ENCODE measurements at regions of chr20 and their contacts with region 1.

Region 1: GRCh38 chr20:13625304-13625979 is 13.3 kb downstream of the TASP1 start:
- DNase-seq: no peak
- H3K4me3 Mint-ChIP-seq: no peak overlapping the region
- H3K27ac Mint-ChIP-seq: no peak overlapping the region
- H3K4me1 Mint-ChIP-seq: peaks cover 7% of the 10 kb centered on the region
- H3K27me3 Mint-ChIP-seq: no peaks in the 10 kb centered on the region
- CTCF ChIP-seq: no peak

Region 2: DNA sequence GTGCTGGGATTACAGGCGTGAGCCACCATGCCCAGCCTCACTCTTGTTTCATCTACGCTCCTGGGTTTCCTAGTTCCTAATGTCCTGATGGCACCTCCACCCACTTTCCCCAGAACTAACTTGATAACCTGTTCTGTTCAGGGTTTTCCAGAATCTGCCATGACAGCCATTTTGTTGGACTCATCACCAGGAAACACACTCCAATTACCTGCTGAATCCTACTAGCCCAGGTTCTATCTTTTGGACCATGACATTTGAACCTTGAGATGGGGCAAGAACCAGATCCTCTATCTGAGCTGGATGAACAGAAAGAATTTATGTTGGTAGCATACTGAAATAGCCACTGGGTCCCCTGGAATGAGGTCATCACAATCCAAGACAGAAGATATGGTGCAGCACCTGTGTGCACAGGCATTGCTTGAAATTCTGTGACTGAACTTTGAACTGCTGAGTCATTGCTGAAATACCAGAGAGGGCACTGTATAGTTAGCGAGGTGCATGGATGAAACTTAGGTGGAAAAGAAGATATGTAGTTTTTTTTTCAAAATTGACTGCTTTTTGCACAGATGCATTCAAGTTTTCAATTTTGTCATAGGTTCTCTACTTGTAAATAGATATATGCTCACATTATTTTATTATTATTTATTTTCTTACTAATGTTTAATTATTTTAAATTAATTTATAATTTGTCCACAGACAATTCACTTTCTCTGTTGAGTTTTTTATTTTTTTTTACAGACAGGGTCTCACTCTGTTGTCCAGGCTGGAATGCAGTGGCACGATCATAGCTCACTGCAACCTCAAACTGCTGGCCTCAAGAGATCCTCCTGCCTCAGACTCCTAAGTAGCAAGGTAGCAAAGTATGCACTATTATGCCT is 56.0 kb after region 1 on chr20:
- CTCF ChIA-PET with region 1: no interaction called
- intact Hi-C with region 1: no loop called
- DNase-seq: peak; percentile 43
- H3K4me3 Mint-ChIP-seq: no peak overlapping the region
- H3K27ac Mint-ChIP-seq: peak overlapping the region; percentile 57
- H3K4me1 Mint-ChIP-seq: peaks cover 8% of the 10 kb centered on the region
- H3K27me3 Mint-ChIP-seq: no peaks in the 10 kb centered on the region
- CTCF ChIP-seq: no peak

Region 3: GRCh38 chr20:13765299-13765698 is 139.9 kb after region 1 on chr20:
- CTCF ChIA-PET with region 1: no interaction called
- intact Hi-C with region 1: loop called (anchors 5 kb)
- DNase-seq: no peak
- H3K4me3 Mint-ChIP-seq: no peak overlapping the region
- H3K27ac Mint-ChIP-seq: no peak overlapping the region
- H3K4me1 Mint-ChIP-seq: no peaks in the 10 kb centered on the region
- H3K27me3 Mint-ChIP-seq: no peaks in the 10 kb centered on the region
- CTCF ChIP-seq: no peak